H1 (cell line): ENCODE measurements at regions of chr11 and their contacts with region 1.

Region 1: GRCh38 chr11:112280268-112281126 is 19.8 kb upstream of the PLET1 start:
- DNase-seq: peak in 1 of 2 experiments; percentile 69
- H3K4me3 ChIP-seq: peak overlapping the region; percentile 14 to 55 (median 44); a peak in 7 of 8 replicates
- H3K27ac ChIP-seq: no peak overlapping the region
- H3K4me1 ChIP-seq: peaks cover 0 to 4% (median 1%) of the 10 kb centered on the region in 4 experiments; a peak in 5 of 7 replicates
- H3K27me3 ChIP-seq: peaks cover 0 to 4% (median 2%) of the 10 kb centered on the region in 4 experiments; a peak in 2 of 7 replicates
- CTCF ChIP-seq: peak; percentile 47 to 81 (median 78)
- EP300 ChIP-seq: no peak
- POLR2A ChIP-seq: no peak
- RAD21 ChIP-seq: peak; percentile 80 to 83

Region 2: DNA sequence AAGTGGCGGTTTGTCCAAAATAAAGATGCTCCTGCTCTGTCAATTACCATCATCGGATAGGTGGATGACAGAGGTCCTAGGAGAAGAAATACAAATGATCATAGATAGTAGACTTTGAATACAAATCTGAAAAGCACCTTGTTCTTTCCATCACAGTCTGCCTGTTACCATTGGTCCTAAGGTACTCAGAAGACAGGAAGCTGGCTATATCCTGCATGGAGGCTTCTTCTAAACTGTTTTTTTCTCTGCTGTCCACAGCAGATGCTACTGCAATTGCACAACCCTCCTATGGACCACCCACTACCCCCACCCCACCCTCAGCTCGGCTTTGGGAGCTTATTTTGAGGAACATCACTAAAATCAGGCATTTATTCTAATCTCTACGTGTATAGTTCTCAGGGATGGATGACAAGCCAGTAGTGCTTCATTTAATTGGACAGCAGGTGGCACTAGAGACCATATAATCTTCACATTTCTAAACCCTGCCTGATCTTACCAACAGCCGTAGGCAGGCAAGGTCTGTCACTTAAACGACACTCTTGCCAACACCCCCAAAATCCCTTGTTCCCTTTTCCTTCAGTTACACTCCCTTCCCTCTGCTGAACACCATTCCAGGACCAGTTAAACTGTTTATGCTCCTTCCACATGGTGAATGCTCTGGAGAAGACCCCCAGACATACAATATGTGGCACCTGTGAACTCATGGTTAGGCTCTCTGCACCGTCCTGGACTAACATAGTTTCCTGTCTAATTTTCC is 60.8 kb before region 1 on chr11:
- CTCF ChIA-PET with region 1: interaction called, 257 read pairs
- POLR2A ChIA-PET with region 1: no interaction called
- DNase-seq: no peak
- H3K4me3 ChIP-seq: no peak overlapping the region
- H3K27ac ChIP-seq: no peak overlapping the region; the same call in 1 of the 2 replicates
- H3K4me1 ChIP-seq: no peaks in the 10 kb centered on the region
- H3K27me3 ChIP-seq: 0 out of 7 replicates have a peak, but pooled peaks cover 0 to 4% (median under 1%) of the 10 kb centered on the region in 4 experiments
- CTCF ChIP-seq: peak in 2 of 3 experiments; percentile 71 to 79; a peak in 3 of 4 replicates
- EP300 ChIP-seq: no peak
- POLR2A ChIP-seq: no peak
- RAD21 ChIP-seq: peak; percentile 93 to 94

Region 3: GRCh38 chr11:112226062-112226830 is 54.3 kb before region 1 on chr11 and contains the start of gene PTS:
- CTCF ChIA-PET with region 1: interaction called, 257 read pairs
- POLR2A ChIA-PET with region 1: interaction called, 4 read pairs
- DNase-seq: peak; percentile 39 to 82
- H3K4me3 ChIP-seq: peak within 1 kb of the TSS; percentile 79 to 89 (median 86)
- H3K27ac ChIP-seq: peak within 1 kb of the TSS; percentile 91
- H3K4me1 ChIP-seq: no peaks in the 10 kb centered on the region; a peak in 1 of 7 replicates
- H3K27me3 ChIP-seq: 0 out of 7 replicates have a peak, but pooled peaks cover 0 to 4% (median under 1%) of the 10 kb centered on the region in 4 experiments
- CTCF ChIP-seq: no peak
- EP300 ChIP-seq: no peak
- POLR2A ChIP-seq: peak; percentile 58 to 90
- RAD21 ChIP-seq: no peak
- total RNA-seq, gene PTS: 25.5 and 25.9 TPM in 2 replicates

Region 4: GRCh38 chr11:112265721-112266409 is 14.6 kb before region 1 on chr11:
- CTCF ChIA-PET with region 1: interaction called, 29 read pairs
- POLR2A ChIA-PET with region 1: interaction called, 3 read pairs
- DNase-seq: no peak
- H3K4me3 ChIP-seq: no peak overlapping the region
- H3K27ac ChIP-seq: no peak overlapping the region
- H3K4me1 ChIP-seq: no peaks in the 10 kb centered on the region
- H3K27me3 ChIP-seq: 0 out of 7 replicates have a peak, but pooled peaks cover 0 to 3% (median 0%) of the 10 kb centered on the region in 4 experiments
- CTCF ChIP-seq: no peak
- EP300 ChIP-seq: no peak
- POLR2A ChIP-seq: no peak
- RAD21 ChIP-seq: no peak

Region 5: DNA sequence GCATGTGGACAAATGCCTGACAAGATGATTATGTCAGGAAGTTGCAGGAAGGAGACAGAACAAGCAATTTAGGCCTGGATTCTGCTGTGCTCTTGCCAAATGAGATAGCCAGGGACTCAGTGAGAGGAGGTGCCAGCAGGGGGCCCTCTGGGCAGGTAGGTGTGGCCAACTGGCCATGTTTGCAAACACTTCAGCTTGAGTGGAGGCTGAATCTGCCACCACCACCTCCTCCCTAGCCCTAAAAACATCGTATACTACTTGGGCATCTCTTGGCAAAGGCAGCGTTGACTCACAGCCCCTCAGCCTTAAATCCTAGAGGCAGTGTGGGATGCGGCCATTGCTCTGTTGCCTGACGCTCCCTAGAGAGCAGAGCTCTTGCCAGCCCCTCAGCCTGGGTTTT is 75.2 kb after region 1 on chr11:
- CTCF ChIA-PET with region 1: interaction called, 11 read pairs
- POLR2A ChIA-PET with region 1: no interaction called
- DNase-seq: peak; percentile 17 to 56
- H3K4me3 ChIP-seq: no peak overlapping the region
- H3K27ac ChIP-seq: no peak overlapping the region
- H3K4me1 ChIP-seq: peaks cover 0 to 3% (median 2%) of the 10 kb centered on the region in 4 experiments; a peak in 2 of 7 replicates
- H3K27me3 ChIP-seq: no peaks in the 10 kb centered on the region; a peak in 1 of 7 replicates
- CTCF ChIP-seq: peak; percentile 15 to 39 (median 33); a peak in 3 of 4 replicates
- EP300 ChIP-seq: no peak
- POLR2A ChIP-seq: no peak
- RAD21 ChIP-seq: peak; percentile 11 to 22; a peak in 1 of 4 replicates

Region 6: GRCh38 chr11:112481893-112482292 is 201.4 kb after region 1 on chr11:
- CTCF ChIA-PET with region 1: no interaction called
- POLR2A ChIA-PET with region 1: no interaction called
- DNase-seq: no peak
- H3K4me3 ChIP-seq: no peak overlapping the region
- H3K27ac ChIP-seq: no peak overlapping the region
- H3K4me1 ChIP-seq: peaks cover 0 to 3% (median 0%) of the 10 kb centered on the region in 4 experiments; a peak in 3 of 7 replicates
- H3K27me3 ChIP-seq: no peaks in the 10 kb centered on the region; a peak in 1 of 7 replicates
- CTCF ChIP-seq: no peak
- EP300 ChIP-seq: no peak
- POLR2A ChIP-seq: no peak
- RAD21 ChIP-seq: no peak